ENCODE measurements at regions of chr12 and their contacts with region 1.

Region 1: DNA sequence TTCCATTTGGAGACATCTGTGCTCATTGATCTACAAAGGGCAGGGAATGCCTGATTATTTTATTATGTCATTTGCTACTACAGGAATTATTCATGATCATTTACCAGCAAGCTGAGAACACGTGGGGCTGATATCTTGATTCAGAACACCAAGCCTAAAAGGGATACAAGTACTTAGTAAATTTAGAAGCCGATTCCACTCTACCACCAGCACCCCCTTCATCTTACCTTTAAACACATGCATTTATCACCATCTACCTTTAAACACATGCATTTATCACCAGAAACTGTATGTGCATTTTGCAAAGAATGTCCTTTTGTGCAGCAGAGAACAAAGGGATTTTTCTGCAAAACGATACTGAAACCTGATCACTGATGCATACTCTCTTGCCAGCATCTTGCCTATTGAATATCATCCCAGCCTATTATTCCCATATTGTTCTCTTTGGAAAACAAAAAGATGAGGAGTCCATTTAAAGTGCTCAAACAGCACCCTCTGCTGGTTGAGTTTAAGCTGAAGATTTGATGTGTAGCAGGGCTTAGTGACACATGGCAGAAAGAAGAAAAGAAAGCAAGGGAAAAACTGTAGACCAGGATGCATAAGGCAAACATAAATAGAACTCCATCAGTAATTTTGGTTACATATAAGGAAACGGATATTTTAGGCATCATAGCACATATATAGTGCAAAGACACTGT is 132.6 kb upstream of the PLEKHG7 start:
- DNase-seq: peak; percentile 87
- H3K4me3 ChIP-seq: no peak overlapping the region
- H3K27ac ChIP-seq: no peak overlapping the region
- H3K4me1 ChIP-seq: no peaks in the 10 kb centered on the region
- H3K27me3 ChIP-seq: no peaks in the 10 kb centered on the region
- CTCF ChIP-seq: peak; percentile 43 to 45
- POLR2A ChIP-seq: no peak

Region 2: GRCh38 chr12:91577586-91578539 is 992.3 kb before region 1 on chr12:
- CTCF ChIA-PET with region 1: interaction called, 6 read pairs
- POLR2A ChIA-PET with region 1: no interaction called
- dilution Hi-C with region 1: no loop called
- intact Hi-C with region 1: loop called (anchors 5 kb)
- DNase-seq: peak; percentile 61
- H3K4me3 ChIP-seq: peak overlapping the region in 1 of 3 experiments; percentile 73
- H3K27ac ChIP-seq: no peak overlapping the region
- H3K4me1 ChIP-seq: peaks cover 4% of the 10 kb centered on the region
- H3K27me3 ChIP-seq: no peaks in the 10 kb centered on the region
- CTCF ChIP-seq: peak; percentile 20 to 21
- POLR2A ChIP-seq: no peak

Region 3: DNA sequence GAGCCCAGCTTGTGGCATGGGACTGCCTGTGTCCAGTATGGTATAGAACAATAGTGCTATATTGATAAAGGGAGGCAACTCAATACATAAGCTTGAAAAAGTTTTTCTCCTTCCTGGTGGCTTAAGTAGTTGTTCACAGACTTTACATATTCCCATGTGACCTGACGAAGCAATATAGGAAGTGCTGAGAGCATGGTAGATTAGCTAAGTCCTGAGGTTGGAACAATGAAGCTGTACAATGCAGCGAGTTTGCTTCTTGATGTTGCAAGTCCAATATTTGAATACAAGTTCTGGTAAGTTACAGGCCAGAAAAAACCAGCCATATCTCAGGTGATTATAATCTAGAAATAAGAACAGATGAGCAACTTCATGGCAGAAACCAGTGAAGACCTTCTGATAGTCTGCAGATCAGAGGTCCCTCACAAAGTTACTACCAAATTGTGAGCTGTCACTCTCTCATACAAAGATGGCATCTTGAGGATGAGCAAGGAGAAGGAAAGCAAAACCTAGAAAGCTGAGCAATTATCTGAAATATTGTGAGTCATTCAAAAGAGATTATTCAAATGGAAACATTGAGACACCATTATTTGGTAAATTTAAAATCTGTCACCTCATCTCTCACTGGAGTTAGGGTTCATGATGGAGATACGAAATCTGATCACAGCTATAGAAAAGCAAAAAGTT is 351.7 kb before region 1 on chr12:
- CTCF ChIA-PET with region 1: no interaction called
- POLR2A ChIA-PET with region 1: no interaction called
- dilution Hi-C with region 1: no loop called
- intact Hi-C with region 1: loop called (anchors 5 kb)
- DNase-seq: no peak
- H3K4me3 ChIP-seq: no peak overlapping the region
- H3K27ac ChIP-seq: no peak overlapping the region
- H3K4me1 ChIP-seq: peaks cover 9% of the 10 kb centered on the region
- H3K27me3 ChIP-seq: no peaks in the 10 kb centered on the region
- CTCF ChIP-seq: no peak
- POLR2A ChIP-seq: no peak

Region 4: GRCh38 chr12:92505254-92506231 is 64.7 kb before region 1 on chr12:
- CTCF ChIA-PET with region 1: interaction called, 6 read pairs
- POLR2A ChIA-PET with region 1: no interaction called
- dilution Hi-C with region 1: no loop called
- intact Hi-C with region 1: loop called (anchors 2 kb)
- DNase-seq: peak; percentile 70
- H3K4me3 ChIP-seq: peak overlapping the region in 1 of 3 experiments; percentile 30
- H3K27ac ChIP-seq: peak overlapping the region; percentile 13
- H3K4me1 ChIP-seq: peaks cover 6% of the 10 kb centered on the region
- H3K27me3 ChIP-seq: peaks cover 0 to 5% of the 10 kb centered on the region in 2 experiments
- CTCF ChIP-seq: no peak
- POLR2A ChIP-seq: no peak

Region 5: DNA sequence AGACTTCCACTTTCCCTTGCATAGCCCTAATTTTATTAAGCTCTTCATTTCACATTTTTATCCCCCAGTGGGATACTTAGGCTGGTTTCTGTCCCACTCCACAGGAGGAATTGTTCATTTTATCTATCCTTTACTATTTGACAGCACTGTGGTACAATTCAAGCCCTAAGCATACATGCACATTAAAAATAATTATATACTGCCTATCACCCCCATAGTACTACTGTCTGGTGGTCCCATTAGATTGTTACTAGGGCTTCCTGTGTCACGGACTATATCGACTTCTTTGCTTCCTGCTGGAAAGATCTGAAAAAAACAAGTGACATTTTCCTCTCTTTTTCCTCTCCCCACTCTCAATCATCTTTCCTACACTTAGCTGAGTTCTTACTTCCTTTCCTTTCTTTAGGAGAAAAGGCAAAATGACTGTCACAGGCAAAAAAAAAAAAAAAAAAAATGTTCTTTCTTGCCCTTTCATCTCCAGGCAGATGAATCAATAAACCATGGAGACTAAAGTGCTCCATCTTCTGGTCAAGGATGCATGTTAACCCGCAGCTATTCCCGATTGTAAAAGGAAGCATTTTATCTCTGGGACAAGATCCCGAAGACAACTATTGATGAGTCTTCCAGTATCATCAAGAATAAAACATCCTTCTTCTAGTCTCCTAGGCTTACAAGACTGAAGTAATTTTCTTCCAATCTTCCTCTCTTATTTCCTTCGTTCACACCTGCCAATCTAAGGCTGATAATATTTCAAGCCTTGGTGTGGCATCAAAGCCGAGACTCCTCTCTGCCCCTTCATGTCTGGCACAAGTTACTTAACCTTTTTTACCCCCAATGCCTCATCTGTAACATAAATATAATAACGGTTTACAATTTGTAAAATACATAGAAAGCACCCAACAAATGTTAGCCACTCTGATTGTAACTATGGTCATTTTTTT is 38.2 kb after region 1 on chr12:
- CTCF ChIA-PET with region 1: interaction called, 24 read pairs
- POLR2A ChIA-PET with region 1: no interaction called
- dilution Hi-C with region 1: no loop called
- intact Hi-C with region 1: loop called (anchors 2 kb)
- DNase-seq: peak; percentile 62
- H3K4me3 ChIP-seq: no peak overlapping the region
- H3K27ac ChIP-seq: no peak overlapping the region
- H3K4me1 ChIP-seq: peaks cover 4% of the 10 kb centered on the region
- H3K27me3 ChIP-seq: no peaks in the 10 kb centered on the region
- CTCF ChIP-seq: peak; percentile 34 to 38
- POLR2A ChIP-seq: no peak

Measured in endothelial cell of umbilical vein (primary cell).